Breast epithelium (tissue), 4 donors: ENCODE measurements at regions of chr13 and their contacts with region 1.

Region 1: DNA sequence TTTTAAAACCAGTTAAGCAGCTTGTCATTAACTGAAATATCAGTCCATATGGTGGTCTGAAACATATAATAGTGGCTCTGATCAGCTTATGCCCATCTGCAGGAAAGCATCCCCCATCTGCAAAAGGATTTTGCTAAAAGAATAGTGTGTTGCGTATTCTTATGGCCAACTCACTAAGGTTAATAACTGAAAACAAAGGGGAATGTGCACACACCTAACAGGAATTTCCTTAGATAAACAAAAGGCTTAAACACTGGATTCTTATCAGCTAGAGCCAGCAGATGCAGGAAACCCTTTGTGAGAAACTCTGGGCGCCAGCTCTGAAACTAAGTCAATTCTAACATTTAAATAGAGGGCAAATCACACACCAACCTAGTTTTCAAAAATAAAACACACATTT is 22.1 kb downstream of the VPS36 start:
- DNase-seq: no peak
- H3K4me3 ChIP-seq: no peak overlapping the region
- H3K27ac ChIP-seq: no peak overlapping the region
- H3K4me1 ChIP-seq: no peaks in the 10 kb centered on the region
- H3K27me3 ChIP-seq: no peaks in the 10 kb centered on the region
- CTCF ChIP-seq: no peak
- POLR2A ChIP-seq: no peak

Region 2: GRCh38 chr13:52034616-52035226 is 393.6 kb before region 1 on chr13:
- intact Hi-C with region 1: loop called (anchors 10 kb)
- DNase-seq: no peak
- H3K4me3 ChIP-seq: no peak overlapping the region
- H3K27ac ChIP-seq: no peak overlapping the region
- H3K4me1 ChIP-seq: no peaks in the 10 kb centered on the region
- H3K27me3 ChIP-seq: no peaks in the 10 kb centered on the region
- CTCF ChIP-seq: no peak
- POLR2A ChIP-seq: no peak